ENCODE measurements at regions of chr3 and their contacts with region 1.

Region 1: GRCh38 chr3:71149959-71150954 is 433.3 kb downstream of the FOXP1 start:
- DNase-seq: no peak
- H3K4me3 Mint-ChIP-seq: peak overlapping the region; percentile 15
- H3K27ac Mint-ChIP-seq: peak overlapping the region; percentile 52
- H3K4me1 Mint-ChIP-seq: peaks cover 43% of the 10 kb centered on the region
- H3K27me3 Mint-ChIP-seq: no peaks in the 10 kb centered on the region

Region 2: GRCh38 chr3:70889162-70890019 is 260.9 kb before region 1 on chr3:
- CTCF ChIA-PET with region 1: no interaction called
- POLR2A ChIA-PET with region 1: no interaction called
- intact Hi-C with region 1: no loop called
- DNase-seq: no peak
- H3K4me3 Mint-ChIP-seq: no peak overlapping the region
- H3K27ac Mint-ChIP-seq: no peak overlapping the region
- H3K4me1 Mint-ChIP-seq: no peaks in the 10 kb centered on the region
- H3K27me3 Mint-ChIP-seq: no peaks in the 10 kb centered on the region

Region 3: GRCh38 chr3:71139496-71139895 is 10.8 kb before region 1 on chr3:
- CTCF ChIA-PET with region 1: no interaction called
- POLR2A ChIA-PET with region 1: no interaction called
- intact Hi-C with region 1: loop called (anchors 1 kb)
- DNase-seq: no peak
- H3K4me3 Mint-ChIP-seq: no peak overlapping the region
- H3K27ac Mint-ChIP-seq: no peak overlapping the region
- H3K4me1 Mint-ChIP-seq: peaks cover 47% of the 10 kb centered on the region
- H3K27me3 Mint-ChIP-seq: no peaks in the 10 kb centered on the region

Measured in activated CD4-positive, alpha-beta memory T cell treated with anti-CD3 and anti-CD28 coated beads for 36 hours (primary cell).